ENCODE measurements at regions of chr3 and their contacts with region 1.

Region 1: DNA sequence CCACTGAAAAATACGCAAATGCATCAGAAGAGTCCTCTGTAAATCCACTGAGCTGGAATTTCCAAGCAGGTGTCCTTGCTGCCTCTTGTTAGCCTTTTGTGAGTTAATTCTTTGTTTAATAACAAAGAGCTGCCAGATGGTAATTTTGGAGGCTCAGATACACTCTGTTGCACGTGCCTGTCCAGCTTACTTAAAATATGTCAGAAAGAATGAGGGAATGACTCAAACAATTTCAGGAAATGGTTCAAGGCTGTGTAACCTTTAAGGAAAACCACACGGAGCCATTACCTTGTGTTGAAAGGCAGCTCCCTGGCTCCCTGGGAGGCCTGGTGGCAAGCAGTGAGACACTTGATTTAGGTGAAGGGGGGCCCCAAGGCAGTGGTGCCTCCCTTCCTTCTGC is 302.2 kb upstream of the CTDSPL start:
- DNase-seq: no peak
- ATAC-seq: no peak
- H3K4me3 ChIP-seq: no peak overlapping the region
- H3K27ac ChIP-seq: peak overlapping the region in 3 of 10 donors; percentile 55 to 73 (median 59)
- H3K4me1 ChIP-seq: peaks cover 2 to 58% (median 33%) of the 10 kb centered on the region in 9 donors
- H3K27me3 ChIP-seq: no peaks in the 10 kb centered on the region
- CTCF ChIP-seq: no peak

Region 2: DNA sequence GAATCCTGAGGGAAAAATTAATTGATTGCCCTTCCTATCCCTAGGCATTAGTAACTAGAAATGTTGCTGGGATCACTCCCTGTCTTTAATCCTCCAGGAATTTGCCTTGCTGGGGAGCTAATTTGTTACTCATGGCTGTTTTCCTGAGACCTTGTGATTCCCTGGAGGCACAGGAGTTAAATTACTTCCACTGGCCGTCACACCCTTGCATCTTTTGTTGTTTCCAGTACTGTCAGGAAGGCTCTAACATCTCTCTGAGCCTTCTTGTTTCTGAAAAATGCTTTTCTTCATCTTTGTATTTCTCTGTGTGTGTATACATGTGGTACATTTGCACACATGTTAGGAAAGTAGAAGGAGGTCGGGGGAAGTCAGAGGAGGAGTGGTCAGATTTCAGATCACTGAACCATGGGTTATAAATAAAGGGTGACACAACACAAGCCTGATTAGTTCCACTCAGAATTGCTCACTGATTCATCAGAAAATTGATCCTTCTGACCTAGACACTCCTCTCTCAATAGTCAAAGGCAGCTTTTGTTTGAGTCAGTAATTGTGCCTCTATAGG is 361.6 kb before region 1 on chr3:
- intact Hi-C with region 1: no loop called
- DNase-seq: no peak
- ATAC-seq: peak in 1 of 8 donors; percentile 46
- H3K4me3 ChIP-seq: no peak overlapping the region
- H3K27ac ChIP-seq: no peak overlapping the region
- H3K4me1 ChIP-seq: peaks cover 0 to 10% (median 0%) of the 10 kb centered on the region in 9 donors
- H3K27me3 ChIP-seq: no peaks in the 10 kb centered on the region
- CTCF ChIP-seq: no peak

Region 3: DNA sequence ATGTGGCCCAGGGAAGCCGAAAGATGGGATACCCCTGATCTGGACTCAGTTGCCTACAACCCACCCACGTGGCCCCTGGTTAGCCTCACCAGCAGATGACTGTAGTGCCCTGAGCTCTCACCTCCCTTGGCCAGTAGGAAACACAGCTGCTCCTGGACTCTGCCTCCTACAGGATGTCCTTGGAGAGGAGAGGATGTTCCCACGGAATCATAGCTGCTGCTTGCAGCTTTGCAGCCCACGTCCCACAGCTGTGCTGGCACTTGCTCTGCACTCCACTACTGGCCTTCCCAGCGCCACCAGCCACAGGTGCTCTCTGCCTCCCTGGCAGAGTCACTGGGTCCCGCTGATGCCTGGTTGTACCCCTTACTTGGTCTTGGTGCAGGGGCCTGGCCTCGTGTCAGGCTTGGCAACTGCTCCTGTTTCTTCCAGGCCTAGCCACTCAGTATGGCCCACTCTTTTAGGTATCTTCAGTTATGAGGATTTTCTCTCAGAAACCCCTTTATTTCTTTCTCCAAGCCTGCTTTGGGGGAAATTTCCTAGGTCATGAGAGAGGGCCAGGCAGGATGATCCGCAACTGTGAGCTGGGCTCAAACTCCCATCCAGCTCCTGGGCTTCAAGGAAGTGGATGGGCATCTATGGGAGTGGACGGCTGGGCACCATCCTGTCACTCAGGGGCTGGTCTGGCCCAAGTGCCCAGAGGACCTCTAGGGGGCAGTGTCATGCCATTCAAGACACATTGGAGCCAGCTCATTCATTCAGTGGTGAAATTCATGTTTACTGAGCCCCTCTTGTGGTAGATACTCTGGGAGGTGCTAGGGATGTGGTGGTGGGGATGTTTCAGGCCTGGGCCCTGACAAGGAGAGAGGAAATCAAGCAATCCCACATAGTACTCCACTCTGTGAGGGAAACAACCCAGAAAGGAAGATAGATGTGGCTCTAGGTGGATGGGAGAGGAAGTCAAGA is 414.9 kb after region 1 on chr3:
- intact Hi-C with region 1: loop called in 1 of 10 experiments (anchors 5 kb)
- DNase-seq: peak; percentile 48 to 67
- ATAC-seq: peak; percentile 71 to 88 (median 81)
- H3K4me3 ChIP-seq: no peak overlapping the region
- H3K27ac ChIP-seq: peak overlapping the region in 6 of 10 donors; percentile 18 to 69 (median 56)
- H3K4me1 ChIP-seq: peaks cover 1 to 37% (median 17%) of the 10 kb centered on the region in 9 donors
- H3K27me3 ChIP-seq: no peaks in the 10 kb centered on the region
- CTCF ChIP-seq: peak; percentile 46 to 87 (median 77)

Measured in heart right ventricle (tissue), 16 donors.